ENCODE measurements at regions of chr17 and their contacts with region 1.

Region 1: DNA sequence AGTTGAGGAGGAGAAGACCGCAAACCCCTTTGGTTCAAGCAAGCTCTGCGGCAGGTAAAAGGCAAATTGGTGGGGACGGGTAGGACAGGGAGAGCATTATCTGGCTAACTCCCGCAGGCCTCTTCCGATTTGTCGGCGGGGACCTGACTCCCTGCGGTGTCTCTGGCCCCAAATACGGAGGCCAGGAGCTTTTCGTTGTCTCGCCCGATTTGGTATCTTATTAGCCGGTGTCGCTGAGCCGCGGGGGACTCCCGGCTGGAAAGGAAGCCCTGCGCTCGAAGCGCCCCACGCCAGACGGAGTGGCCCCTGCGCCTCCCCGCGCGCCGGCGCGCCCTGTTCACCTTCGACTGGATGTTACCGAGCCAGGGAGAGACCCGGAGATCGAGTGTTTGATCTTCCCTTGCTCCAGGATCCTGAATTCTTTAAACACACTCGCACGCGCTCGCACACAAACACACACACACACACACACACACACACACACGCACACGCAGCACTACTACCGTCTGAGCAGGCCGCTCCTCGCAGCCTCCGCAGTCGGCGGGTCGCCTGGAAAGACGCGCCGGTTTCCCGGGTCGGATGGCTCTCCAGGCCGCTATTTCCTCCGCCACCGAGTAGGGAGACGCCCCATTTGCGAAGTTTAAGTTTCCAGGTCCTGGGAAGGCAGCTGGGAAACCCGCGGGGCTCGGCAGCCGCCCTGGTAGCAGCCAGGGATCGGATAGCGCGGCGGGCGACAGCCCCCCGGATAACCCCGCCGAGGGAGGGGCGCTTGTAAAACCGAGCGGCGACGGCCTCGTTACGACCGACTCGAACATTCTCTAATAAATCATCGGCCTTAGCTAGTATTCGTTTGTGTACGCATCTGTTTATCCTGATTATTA is 3.3 kb downstream of the PRAC1 start:
- DNase-seq: peak in 1 of 4 donors; percentile 67
- ATAC-seq: no peak
- H3K4me3 ChIP-seq: no peak overlapping the region
- H3K27ac ChIP-seq: no peak overlapping the region
- H3K4me1 ChIP-seq: peaks cover 5 to 24% of the 10 kb centered on the region in 2 donors
- H3K27me3 ChIP-seq: peaks cover 99 to 100% of the 10 kb centered on the region in 2 donors
- CTCF ChIP-seq: no peak

Region 2: GRCh38 chr17:48597778-48598631 is 121.0 kb before region 1 on chr17:
- intact Hi-C with region 1: no loop called
- DNase-seq: peak in 3 of 4 donors; percentile 83 to 92 (median 87)
- ATAC-seq: peak; percentile 29
- H3K4me3 ChIP-seq: peak overlapping the region; percentile 43 to 44
- H3K27ac ChIP-seq: peak overlapping the region; percentile 68 to 82
- H3K4me1 ChIP-seq: peaks cover 13 to 37% of the 10 kb centered on the region in 2 donors
- H3K27me3 ChIP-seq: peaks cover 72 to 99% of the 10 kb centered on the region in 2 donors
- CTCF ChIP-seq: no peak

Region 3: DNA sequence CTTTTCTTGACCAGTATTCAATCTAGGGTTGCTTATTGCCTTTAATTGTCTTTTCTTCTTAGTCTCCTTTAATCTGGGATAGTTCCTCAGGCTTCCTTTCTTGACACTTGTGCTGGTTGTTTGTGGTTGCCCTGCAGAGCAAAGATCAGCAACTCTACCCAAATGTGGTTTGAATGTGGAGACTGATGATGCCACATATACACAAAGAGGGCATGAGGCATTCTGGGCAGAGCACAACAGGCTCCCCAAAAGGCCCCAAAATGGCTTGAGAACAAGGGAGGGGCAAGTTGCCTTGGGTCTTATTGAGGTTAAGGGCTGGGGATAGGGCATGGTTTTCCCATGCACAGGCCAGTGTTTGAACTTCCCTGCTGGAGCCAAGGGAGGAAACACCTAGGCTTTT is 63.1 kb before region 1 on chr17:
- intact Hi-C with region 1: no loop called
- DNase-seq: no peak
- ATAC-seq: no peak
- H3K4me3 ChIP-seq: no peak overlapping the region
- H3K27ac ChIP-seq: no peak overlapping the region
- H3K4me1 ChIP-seq: no peaks in the 10 kb centered on the region
- H3K27me3 ChIP-seq: peaks cover 0 to 63% of the 10 kb centered on the region in 2 donors
- CTCF ChIP-seq: no peak

Region 4: DNA sequence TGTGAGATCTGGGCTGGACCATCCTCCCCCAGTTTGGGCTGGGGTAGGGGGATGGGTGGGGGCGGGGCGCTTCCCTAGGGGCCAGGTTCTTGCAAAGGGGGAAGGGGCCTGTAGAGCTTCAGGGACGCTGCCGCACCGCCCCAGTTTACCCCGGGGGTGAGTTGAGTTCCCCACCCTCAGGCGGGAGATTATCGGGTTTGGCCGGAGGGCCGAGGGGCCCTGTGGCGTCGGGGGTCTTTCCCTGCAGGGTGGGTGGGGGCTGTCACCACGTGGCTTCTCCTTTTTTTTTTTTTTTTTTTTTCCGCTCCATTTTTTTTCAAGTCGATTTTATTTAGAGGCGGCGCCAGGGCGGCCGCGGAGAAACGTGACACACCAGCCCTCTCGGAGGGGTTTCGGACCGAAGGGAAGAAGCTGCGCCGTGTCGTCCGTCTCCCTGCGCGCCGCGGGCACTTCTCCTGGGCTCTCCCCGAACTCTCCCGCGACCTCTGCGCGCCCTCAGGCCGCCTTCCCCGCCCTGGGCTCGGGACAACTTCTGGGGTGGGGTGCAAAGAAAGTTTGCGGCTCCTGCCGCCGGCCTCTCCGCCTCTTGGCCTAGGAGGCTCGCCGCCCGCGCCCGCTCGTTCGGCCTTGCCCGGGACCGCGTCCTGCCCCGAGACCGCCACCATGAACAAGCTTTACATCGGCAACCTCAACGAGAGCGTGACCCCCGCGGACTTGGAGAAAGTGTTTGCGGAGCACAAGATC is 278.3 kb after region 1 on chr17 and contains the start of gene IGF2BP1:
- intact Hi-C with region 1: loop called in 1 of 2 experiments (anchors 10 kb)
- DNase-seq: peak in 2 of 4 donors; percentile 78 to 85
- ATAC-seq: peak; percentile 45
- H3K4me3 ChIP-seq: no peak within 1 kb of the TSS
- H3K27ac ChIP-seq: no peak within 1 kb of the TSS
- H3K4me1 ChIP-seq: peaks cover 0 to 30% of the 10 kb centered on the region in 2 donors
- H3K27me3 ChIP-seq: peaks cover 98% of the 10 kb centered on the region in 2 donors
- CTCF ChIP-seq: no peak
- polyA plus RNA-seq, gene IGF2BP1: 25.8 to 32.1 (median 29.5) TPM